ENCODE measurements at regions of chr2 and their contacts with region 1.

Region 1: GRCh38 chr2:201158111-201158929 is 24.6 kb upstream of the CASP10 start:
- DNase-seq: peak; percentile 51
- ATAC-seq: peak; percentile 92
- H3K4me3 Mint-ChIP-seq: no peak overlapping the region
- H3K27ac Mint-ChIP-seq: peak overlapping the region; percentile 91
- H3K4me1 Mint-ChIP-seq: peaks cover 13% of the 10 kb centered on the region
- H3K27me3 Mint-ChIP-seq: no peaks in the 10 kb centered on the region
- CTCF ChIP-seq: peak; percentile 7; the same call in 1 of the 2 replicates

Region 2: DNA sequence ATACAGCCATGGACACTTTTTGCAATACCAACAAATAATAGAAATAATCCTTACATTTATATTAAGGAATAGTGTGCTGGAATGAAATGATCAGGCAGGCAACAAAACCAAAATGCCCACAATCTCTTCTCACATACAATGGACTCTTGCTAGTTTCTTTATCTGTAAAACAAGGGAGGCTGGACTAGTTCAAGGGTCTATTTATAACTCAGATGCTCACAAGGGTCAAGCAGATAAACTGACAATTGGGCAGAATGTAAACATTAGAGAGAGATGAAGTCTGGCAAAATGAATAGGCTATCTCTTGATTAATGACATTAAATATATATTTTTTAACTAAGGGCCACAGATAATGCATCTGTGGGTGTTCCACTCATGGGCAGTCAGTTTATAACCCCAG is 280.9 kb before region 1 on chr2:
- CTCF ChIA-PET with region 1: no interaction called
- POLR2A ChIA-PET with region 1: no interaction called
- DNase-seq: no peak
- ATAC-seq: no peak
- H3K4me3 Mint-ChIP-seq: no peak overlapping the region
- H3K27ac Mint-ChIP-seq: no peak overlapping the region
- H3K4me1 Mint-ChIP-seq: no peaks in the 10 kb centered on the region
- H3K27me3 Mint-ChIP-seq: no peaks in the 10 kb centered on the region
- CTCF ChIP-seq: no peak

Region 3: DNA sequence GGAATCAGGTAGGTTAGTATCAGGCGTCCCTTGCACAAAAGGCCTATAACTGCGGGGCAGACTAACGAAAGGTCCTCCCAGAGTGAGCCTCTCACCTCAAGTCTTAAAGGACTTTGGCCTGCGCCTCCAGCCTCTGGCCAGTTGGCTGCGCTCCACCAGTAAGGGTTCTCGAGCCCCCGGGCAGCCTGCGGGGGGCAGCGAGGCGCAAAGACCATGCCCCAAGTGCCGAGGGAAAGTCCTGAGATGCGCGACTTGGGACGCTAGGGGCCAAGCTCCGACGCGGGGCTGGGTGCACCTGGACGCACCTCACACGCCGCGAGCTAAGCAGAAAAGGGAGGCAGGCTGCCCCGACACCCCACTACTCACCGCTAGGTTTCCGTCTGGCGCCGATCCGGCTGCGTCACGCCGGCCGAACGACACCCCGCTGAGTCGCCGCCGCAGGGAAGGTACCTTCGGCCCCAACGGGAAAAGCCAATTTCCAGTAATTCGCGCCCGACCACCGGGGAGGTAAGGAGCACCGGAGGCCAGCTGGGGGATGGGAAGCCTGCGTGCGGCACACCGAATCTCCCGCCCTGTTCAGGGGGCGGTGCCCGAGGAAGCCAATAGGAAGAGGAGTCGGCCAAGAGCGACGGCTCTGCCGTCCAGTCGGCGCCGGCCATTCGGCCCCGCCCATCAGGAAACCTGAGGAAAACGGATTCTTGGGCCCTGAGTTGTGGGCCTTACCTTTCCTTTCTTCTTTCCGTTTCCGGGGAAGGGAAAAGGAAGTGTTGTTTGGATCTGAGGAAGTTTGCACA is 195.0 kb before region 1 on chr2 and contains the start of gene ORC2:
- CTCF ChIA-PET with region 1: interaction called, 42 read pairs
- POLR2A ChIA-PET with region 1: interaction called, 3 read pairs
- DNase-seq: peak; percentile 96
- ATAC-seq: peak; percentile 95
- H3K4me3 Mint-ChIP-seq: peak within 1 kb of the TSS; percentile 98
- H3K27ac Mint-ChIP-seq: peak within 1 kb of the TSS; percentile 98
- H3K4me1 Mint-ChIP-seq: peaks cover 30% of the 10 kb centered on the region
- H3K27me3 Mint-ChIP-seq: no peaks in the 10 kb centered on the region
- CTCF ChIP-seq: 0 out of 2 replicates have a peak, but pooled peaks have one; percentile 22
- total RNA-seq, gene ORC2: 54.9 to 57.9 TPM (median 56.0 TPM) in 3 replicates

Region 4: GRCh38 chr2:201100497-201100896 is 57.8 kb before region 1 on chr2:
- CTCF ChIA-PET with region 1: interaction called, 10 read pairs
- POLR2A ChIA-PET with region 1: interaction called, 5 read pairs
- DNase-seq: no peak
- ATAC-seq: no peak
- H3K4me3 Mint-ChIP-seq: no peak overlapping the region
- H3K27ac Mint-ChIP-seq: no peak overlapping the region
- H3K4me1 Mint-ChIP-seq: no peaks in the 10 kb centered on the region
- H3K27me3 Mint-ChIP-seq: no peaks in the 10 kb centered on the region; the same call in 1 of the 2 replicates
- CTCF ChIP-seq: no peak

Region 5: DNA sequence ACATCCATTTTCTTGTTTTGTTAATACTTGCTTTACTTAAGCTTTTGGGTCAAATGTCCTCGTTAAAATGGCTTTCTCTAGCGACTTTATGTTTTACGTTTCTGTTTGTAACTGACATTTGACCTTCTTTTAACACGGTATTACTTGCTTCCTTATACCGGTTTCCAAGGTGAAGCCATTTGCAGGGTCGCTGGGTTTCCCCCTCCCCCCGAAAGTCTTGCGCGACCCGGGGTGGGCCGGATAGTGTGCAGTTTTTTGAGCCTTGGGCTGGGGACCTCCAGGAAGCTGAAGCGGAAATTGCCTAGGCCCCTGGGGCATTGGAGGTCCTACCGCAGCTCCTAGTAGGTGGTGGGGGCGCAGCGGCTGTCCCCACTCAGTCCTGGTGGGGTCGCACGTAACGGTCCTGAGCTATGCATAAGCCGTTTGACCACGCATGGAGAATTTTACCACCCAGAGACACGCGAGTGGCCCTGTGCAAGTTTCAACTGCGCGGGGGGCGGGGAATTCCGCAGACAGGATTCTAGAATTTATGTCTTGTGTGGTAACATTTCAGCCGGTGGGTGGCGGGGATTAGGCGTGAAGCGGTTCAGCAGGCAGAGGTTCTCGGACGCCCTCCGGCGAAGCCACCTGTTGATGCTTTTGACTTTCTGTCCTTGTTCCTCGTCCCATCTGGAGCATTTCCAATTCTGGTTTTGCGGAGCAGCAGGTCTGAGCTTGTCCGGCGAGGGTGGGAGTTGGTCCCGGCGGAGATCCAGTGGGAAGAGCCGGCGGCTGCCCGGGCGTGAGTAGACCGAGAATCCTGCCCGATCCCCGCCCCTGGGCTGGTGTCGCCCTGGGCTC is 40.0 kb before region 1 on chr2:
- CTCF ChIA-PET with region 1: interaction called, 15 read pairs
- POLR2A ChIA-PET with region 1: interaction called, 3 read pairs
- DNase-seq: peak; percentile 76
- ATAC-seq: peak; percentile 49
- H3K4me3 Mint-ChIP-seq: peak overlapping the region; percentile 88
- H3K27ac Mint-ChIP-seq: peak overlapping the region; percentile 95
- H3K4me1 Mint-ChIP-seq: peaks cover 43% of the 10 kb centered on the region
- H3K27me3 Mint-ChIP-seq: peaks cover 4% of the 10 kb centered on the region; the same call in 1 of the 2 replicates
- CTCF ChIP-seq: no peak

Region 6: DNA sequence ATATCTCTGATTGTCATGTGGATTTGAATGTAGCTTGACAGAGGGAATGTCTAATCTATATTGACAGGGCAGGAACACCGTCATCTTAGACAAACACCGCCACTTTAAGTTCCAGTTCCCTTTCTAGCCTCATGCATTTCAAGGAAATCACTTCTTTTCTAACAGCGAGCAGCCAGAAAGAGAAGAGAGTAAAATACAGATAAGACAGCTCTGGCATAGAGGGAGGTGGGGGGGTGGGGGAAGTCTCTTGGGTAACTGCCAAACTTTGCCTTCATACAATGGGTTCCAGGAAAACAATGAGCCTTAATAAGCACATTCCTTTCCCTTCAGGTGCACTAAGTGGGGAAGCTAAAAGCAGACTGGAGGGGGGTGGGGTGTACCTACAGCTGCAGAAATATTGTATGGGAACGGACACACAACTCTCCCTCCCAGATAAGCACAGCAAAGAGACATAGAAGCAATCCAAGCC is 61.8 kb after region 1 on chr2:
- CTCF ChIA-PET with region 1: no interaction called
- POLR2A ChIA-PET with region 1: no interaction called
- DNase-seq: no peak
- ATAC-seq: peak; percentile 36; the same call in 1 of the 2 replicates
- H3K4me3 Mint-ChIP-seq: no peak overlapping the region
- H3K27ac Mint-ChIP-seq: no peak overlapping the region
- H3K4me1 Mint-ChIP-seq: peaks cover 26% of the 10 kb centered on the region
- H3K27me3 Mint-ChIP-seq: no peaks in the 10 kb centered on the region; the same call in 1 of the 2 replicates
- CTCF ChIP-seq: no peak

Region 7: DNA sequence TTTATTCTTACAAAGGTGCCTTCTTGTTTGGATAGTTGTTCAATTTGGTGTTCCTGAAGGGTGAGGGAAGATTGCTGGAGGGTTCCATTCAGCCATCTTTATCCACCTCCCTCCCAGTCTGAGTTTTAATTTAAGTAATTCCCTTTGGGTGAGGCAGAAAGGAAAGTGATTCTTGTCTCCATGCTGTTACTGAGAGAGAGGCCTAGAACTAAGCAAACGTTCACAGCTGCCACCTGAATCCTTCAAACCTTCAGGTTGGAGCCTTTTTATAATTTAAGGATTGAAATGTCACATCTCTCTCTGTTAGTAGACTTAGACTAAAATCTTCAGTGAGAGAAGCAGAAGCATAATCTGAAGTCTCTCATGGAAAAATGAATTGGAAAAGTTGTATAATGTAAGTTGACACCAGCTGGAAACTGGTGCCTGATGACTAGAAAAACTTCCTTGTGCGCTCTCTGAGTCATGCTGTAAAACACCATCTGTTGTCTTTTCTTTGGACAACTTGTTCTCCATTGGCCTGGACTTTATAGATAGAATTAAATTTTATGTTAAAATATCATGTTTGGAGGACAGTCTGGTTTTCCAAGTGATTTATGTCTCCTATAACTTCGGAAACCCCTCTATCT is 307.8 kb after region 1 on chr2:
- CTCF ChIA-PET with region 1: no interaction called
- POLR2A ChIA-PET with region 1: no interaction called
- DNase-seq: no peak
- ATAC-seq: no peak
- H3K4me3 Mint-ChIP-seq: no peak overlapping the region
- H3K27ac Mint-ChIP-seq: no peak overlapping the region
- H3K4me1 Mint-ChIP-seq: peaks cover 8% of the 10 kb centered on the region
- H3K27me3 Mint-ChIP-seq: no peaks in the 10 kb centered on the region
- CTCF ChIP-seq: no peak

Measured in WTC11 (cell line).